T-cell (primary cell): ENCODE measurements at regions of chr13 and their contacts with region 1.

Region 1: GRCh38 chr13:112942689-112943308 is 26.2 kb upstream of the MCF2L start:
- DNase-seq: peak; percentile 83 to 98 (median 94)
- ATAC-seq: peak; percentile 94 to 98 (median 96)
- H3K4me3 ChIP-seq: peak overlapping the region; percentile 36 to 82
- H3K4me3 Mint-ChIP-seq: peak overlapping the region; percentile 80 to 90 (median 89)
- H3K27ac ChIP-seq: no peak overlapping the region
- H3K27ac Mint-ChIP-seq: no peak overlapping the region
- H3K4me1 ChIP-seq: peaks cover 7 to 17% of the 10 kb centered on the region in 2 experiments
- H3K4me1 Mint-ChIP-seq: peaks cover 8 to 11% (median 10%) of the 10 kb centered on the region in 3 donors
- H3K27me3 ChIP-seq: peaks cover 0 to 39% of the 10 kb centered on the region in 2 experiments
- H3K27me3 Mint-ChIP-seq: peaks cover 23 to 27% of the 10 kb centered on the region in 2 donors

Region 2: GRCh38 chr13:113029487-113030258 is 86.9 kb after region 1 on chr13:
- CTCF ChIA-PET with region 1: interaction called, 3 to 15 read pairs
- POLR2A ChIA-PET with region 1: no interaction called
- DNase-seq: peak in 28 of 35 experiments; percentile 8 to 60 (median 28)
- ATAC-seq: peak in 3 of 4 experiments; percentile 32 to 59 (median 43)
- H3K4me3 ChIP-seq: no peak overlapping the region
- H3K4me3 Mint-ChIP-seq: no peak overlapping the region
- H3K27ac ChIP-seq: no peak overlapping the region
- H3K27ac Mint-ChIP-seq: no peak overlapping the region
- H3K4me1 ChIP-seq: peaks cover 0 to 5% of the 10 kb centered on the region in 2 experiments
- H3K4me1 Mint-ChIP-seq: peaks cover 0 to 4% (median 0%) of the 10 kb centered on the region in 3 donors
- H3K27me3 ChIP-seq: peaks cover 0 to 2% of the 10 kb centered on the region in 2 experiments
- H3K27me3 Mint-ChIP-seq: no peaks in the 10 kb centered on the region

Region 3: GRCh38 chr13:113393563-113394338 is 451.0 kb after region 1 on chr13:
- CTCF ChIA-PET with region 1: interaction called in 1 of 2 experiments, 10 read pairs
- POLR2A ChIA-PET with region 1: no interaction called
- DNase-seq: peak; percentile 62 to 90 (median 78)
- ATAC-seq: peak; percentile 94 to 98 (median 96)
- H3K4me3 ChIP-seq: peak overlapping the region; percentile 73 to 78
- H3K4me3 Mint-ChIP-seq: peak overlapping the region; percentile 73 to 82 (median 77)
- H3K27ac ChIP-seq: no peak overlapping the region
- H3K27ac Mint-ChIP-seq: peak overlapping the region in 1 of 2 donors; percentile 73
- H3K4me1 ChIP-seq: peaks cover 0 to 13% of the 10 kb centered on the region in 2 experiments
- H3K4me1 Mint-ChIP-seq: peaks cover 0 to 6% (median 5%) of the 10 kb centered on the region in 3 donors
- H3K27me3 ChIP-seq: peaks cover 0 to 13% of the 10 kb centered on the region in 2 experiments
- H3K27me3 Mint-ChIP-seq: no peaks in the 10 kb centered on the region